PC-9 (cell line): ENCODE measurements at regions of chr19 and their contacts with region 1.

Region 1: DNA sequence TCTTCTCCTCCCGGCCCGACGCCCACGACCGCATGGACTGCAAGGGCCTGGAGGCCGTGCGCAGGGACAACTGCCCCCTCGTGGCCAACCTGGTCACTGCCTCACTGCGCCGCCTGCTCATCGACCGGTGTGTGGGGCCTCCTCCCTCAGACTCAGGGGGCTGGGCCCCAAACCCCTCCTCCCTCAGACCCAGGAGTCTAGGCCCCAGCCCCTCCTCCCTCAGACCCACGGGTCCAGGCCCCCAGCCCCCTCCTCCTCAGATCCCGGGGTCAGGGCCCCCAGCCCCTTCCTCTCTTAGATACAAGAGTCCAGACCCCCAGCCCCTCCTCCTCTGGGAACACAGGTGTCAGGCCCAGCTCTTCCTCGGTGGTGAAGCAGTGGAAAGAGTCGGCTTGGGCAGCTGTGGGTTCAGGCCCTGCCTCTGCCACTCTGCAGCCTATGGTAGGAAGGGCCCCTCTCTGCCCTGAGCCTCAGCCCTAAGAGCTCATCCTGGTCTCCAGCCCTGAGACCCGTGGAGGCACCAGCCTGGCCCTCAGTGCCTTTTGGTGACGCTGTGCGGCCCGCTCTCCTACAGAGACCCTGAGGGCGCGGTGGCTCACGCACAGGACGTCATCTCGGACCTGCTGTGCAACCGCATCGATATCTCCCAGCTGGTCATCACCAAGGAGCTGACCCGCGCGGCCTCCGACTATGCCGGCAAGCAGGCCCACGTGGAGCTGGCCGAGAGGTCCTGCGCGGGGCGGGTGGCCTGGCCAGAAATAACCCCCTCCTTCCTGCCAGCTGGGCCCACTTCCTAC is 3.7 kb upstream of the SPIB start:
- DNase-seq: peak in 1 of 2 experiments; percentile 12
- H3K4me3 ChIP-seq: no peak overlapping the region
- H3K27ac ChIP-seq: no peak overlapping the region
- H3K4me1 ChIP-seq: no peaks in the 10 kb centered on the region
- H3K27me3 ChIP-seq: no peaks in the 10 kb centered on the region
- CTCF ChIP-seq: peak; percentile 77

Region 2: GRCh38 chr19:50383852-50384684 is 31.0 kb before region 1 on chr19 and contains the start of gene POLD1:
- CTCF ChIA-PET with region 1: interaction called, 13 read pairs
- POLR2A ChIA-PET with region 1: no interaction called
- intact Hi-C with region 1: no loop called
- DNase-seq: peak; percentile 92 to 99
- H3K4me3 ChIP-seq: peak within 1 kb of the TSS; percentile 78
- H3K27ac ChIP-seq: peak within 1 kb of the TSS; percentile 15
- H3K4me1 ChIP-seq: peaks cover 10% of the 10 kb centered on the region; the same call in 1 of the 2 replicates
- H3K27me3 ChIP-seq: no peaks in the 10 kb centered on the region
- CTCF ChIP-seq: no peak
- total RNA-seq, gene POLD1: 91.2 and 101 TPM in 2 replicates

Region 3: DNA sequence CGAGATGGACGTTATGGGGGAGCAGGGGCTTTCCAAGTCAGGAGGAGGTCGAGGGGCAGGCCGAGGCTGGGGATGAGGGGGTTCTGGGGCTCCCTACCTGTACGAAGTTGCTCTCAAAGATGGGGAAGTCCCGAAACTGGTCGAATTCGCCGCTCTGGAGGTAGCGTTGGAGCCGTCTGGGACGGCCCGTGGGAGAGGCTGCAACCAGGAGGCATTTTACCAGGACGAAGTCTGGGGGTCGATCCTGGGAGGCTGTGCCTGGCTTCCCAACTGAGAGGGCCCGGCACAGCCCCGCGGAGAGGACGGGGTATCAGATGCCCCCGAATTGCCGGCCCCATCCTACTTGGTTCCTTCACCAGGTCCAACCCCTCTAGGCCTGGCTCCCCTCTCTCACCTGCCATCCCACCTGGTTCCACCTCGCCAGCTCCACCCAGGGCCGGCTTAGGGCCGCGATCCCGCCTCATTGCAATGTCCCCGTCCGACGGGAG is 60.7 kb after region 1 on chr19:
- CTCF ChIA-PET with region 1: no interaction called
- POLR2A ChIA-PET with region 1: no interaction called
- intact Hi-C with region 1: no loop called
- DNase-seq: no peak
- H3K4me3 ChIP-seq: no peak overlapping the region
- H3K27ac ChIP-seq: no peak overlapping the region
- H3K4me1 ChIP-seq: peaks cover 8% of the 10 kb centered on the region
- H3K27me3 ChIP-seq: no peaks in the 10 kb centered on the region
- CTCF ChIP-seq: no peak